Posterior cingulate gyrus (tissue), 11 donors: ENCODE measurements at regions of chr2 and their contacts with region 1.

Region 1: GRCh38 chr2:205947621-205948495 is 138.1 kb downstream of the INO80D start:
- DNase-seq: peak in 9 of 10 donors; percentile 19 to 93 (median 70)

Region 2: GRCh38 chr2:205564346-205565151 is 383.3 kb before region 1 on chr2:
- intact Hi-C with region 1: no loop called
- DNase-seq: peak in 1 of 10 donors; percentile 16

Region 3: DNA sequence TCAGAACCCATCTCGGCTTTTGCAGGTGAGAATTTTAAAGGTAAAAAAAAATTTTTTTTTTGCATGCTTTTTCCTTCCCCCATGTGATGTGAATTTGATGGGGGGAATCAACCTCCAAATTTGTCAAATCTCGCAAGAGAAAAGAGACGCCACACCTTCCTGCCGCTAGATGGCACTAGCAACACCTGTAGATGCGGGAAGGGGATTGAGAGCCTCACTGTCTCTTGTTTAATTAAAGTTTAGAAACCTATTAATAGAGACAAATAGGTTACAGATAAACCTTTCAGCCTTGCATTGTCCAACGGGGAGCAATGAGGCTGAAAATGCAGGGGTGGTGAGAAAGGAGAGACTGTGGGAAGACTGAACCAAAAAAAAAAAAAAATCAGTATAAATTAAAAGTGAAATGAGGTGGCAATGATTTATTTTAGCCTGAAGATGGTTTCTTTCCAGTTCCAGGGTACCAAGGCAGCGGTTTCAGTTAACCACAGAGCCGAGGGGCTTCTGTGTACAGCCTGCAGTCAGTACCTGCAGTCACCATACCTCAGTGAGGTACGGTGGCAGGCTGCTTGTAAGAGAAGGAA is 181.0 kb before region 1 on chr2:
- intact Hi-C with region 1: loop called (anchors 5 kb)
- DNase-seq: peak; percentile 16 to 94 (median 68)